GM23248 (cell line): ENCODE measurements at regions of chr13 and their contacts with region 1.

Region 1: DNA sequence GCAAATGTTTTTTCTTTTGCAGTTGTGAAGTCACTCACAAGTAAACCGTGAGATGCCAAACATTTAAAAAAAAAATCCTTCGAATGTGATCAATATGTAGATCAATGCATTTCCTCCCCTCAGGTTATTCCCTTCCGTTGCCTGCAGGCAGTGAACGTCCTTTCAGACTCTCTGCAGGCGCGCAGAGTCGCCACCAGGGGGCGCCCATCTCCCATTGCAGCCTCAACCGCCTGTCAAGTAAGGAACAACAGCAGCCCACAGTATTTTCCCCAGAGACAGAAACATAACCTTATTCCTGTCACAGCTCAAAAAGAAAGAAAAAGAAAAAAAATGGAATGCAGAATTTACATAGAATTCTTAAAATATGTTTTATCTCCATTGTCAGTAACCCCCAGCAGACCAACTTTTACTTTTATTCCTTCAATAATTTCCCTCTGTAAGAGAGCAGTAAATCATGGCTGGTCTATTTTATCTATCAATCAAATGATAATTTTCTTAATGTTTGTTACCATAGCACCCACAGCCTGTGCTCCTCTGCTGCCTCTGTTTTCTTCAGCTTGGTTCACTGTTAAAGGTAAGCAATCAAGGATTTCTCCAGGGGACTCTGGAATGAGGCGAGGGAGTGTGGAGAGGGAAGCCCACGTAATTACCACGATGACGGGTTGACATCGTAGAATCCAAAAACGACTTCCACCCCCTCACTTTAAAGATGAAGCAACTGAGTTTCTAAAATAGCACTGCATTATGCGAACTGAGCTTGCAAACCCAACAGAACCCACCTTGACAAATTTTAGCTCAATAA is 637.6 kb upstream of the ARGLU1 start:
- DNase-seq: peak; percentile 73
- H3K4me3 ChIP-seq: no peak overlapping the region
- H3K27ac ChIP-seq: no peak overlapping the region
- H3K4me1 ChIP-seq: peaks cover 16% of the 10 kb centered on the region
- H3K27me3 ChIP-seq: no peaks in the 10 kb centered on the region

Region 2: GRCh38 chr13:106418556-106418955 is 786.9 kb before region 1 on chr13:
- in situ Hi-C with region 1: no loop called
- DNase-seq: peak; percentile 93
- H3K4me3 ChIP-seq: peak overlapping the region; percentile 52
- H3K27ac ChIP-seq: no peak overlapping the region
- H3K4me1 ChIP-seq: peaks cover 12% of the 10 kb centered on the region
- H3K27me3 ChIP-seq: peaks cover 23% of the 10 kb centered on the region

Region 3: DNA sequence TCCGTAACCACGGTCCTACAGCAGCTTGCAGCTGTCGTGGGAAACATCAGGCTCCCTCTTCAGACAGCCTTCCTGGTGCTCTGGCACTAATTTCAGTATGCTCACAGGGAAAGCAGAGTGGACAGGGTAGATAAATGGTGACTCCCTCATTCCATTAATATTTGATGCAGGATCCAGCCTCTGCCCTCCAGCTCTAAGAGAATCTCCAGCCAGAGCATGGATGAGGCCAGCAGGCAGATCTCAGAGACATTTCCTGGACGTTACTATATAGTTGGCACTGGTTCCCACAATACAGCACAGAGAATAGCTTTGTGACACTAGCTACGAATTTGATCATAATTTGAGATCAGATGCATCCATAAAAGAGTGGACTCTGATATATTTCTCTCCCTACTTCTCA is 668.4 kb after region 1 on chr13:
- in situ Hi-C with region 1: loop called (anchors 10 kb)
- DNase-seq: peak; percentile 18
- H3K4me3 ChIP-seq: no peak overlapping the region
- H3K27ac ChIP-seq: no peak overlapping the region
- H3K4me1 ChIP-seq: no peaks in the 10 kb centered on the region
- H3K27me3 ChIP-seq: peaks cover 6% of the 10 kb centered on the region; the same call in 1 of the 2 replicates

Region 4: GRCh38 chr13:108166078-108166477 is 960.6 kb after region 1 on chr13:
- in situ Hi-C with region 1: loop called (anchors 10 kb)
- DNase-seq: no peak
- H3K4me3 ChIP-seq: no peak overlapping the region
- H3K27ac ChIP-seq: no peak overlapping the region
- H3K4me1 ChIP-seq: no peaks in the 10 kb centered on the region
- H3K27me3 ChIP-seq: no peaks in the 10 kb centered on the region